ENCODE measurements at regions of chr18 and their contacts with region 1.

Region 1: DNA sequence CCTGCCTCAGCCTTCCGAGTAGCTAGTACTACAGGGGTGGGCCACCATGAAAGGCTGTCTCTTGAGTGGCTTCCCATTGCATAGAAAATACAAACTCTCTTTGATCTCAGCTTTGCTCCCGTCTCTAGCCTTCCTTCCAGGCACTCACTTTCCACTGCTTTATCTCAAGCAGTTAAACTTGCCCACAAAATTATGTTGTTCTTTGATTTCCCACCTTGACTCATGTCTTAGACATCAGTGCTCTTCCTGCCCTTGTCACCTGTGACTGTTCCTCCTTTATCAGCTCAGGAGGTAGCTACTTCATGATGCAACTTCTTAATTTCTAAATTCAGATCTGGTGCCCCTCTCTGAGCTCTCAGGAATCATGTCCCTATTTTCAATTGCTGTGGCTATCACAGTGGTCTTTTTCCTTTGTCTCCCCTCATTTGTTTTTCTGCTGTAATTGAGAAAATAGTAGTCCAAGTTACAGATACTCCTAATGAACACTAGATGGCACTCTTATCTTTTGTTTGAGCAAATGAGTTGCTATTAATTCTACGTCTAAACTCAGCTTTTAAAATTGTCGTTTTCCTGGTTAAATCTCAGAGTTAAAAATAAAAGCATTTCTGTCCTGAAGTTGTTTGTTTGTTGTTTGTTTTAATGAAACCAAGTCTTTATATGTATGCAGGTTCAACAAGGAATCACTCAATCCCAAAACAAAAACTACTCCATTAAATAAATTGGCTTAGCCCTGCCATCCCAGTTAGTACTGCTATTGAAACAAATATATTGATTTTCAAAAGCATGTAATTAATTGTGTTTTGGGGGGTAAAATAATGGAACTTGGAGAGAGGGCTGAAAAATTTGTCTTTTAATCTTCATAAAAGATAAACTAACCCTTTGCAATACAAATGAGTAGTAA is 46.9 kb upstream of the GREB1L start:
- DNase-seq: no peak
- H3K4me3 Mint-ChIP-seq: no peak overlapping the region
- H3K27ac Mint-ChIP-seq: no peak overlapping the region
- H3K4me1 Mint-ChIP-seq: no peaks in the 10 kb centered on the region
- H3K27me3 Mint-ChIP-seq: peaks cover 9% of the 10 kb centered on the region

Region 2: GRCh38 chr18:21242141-21242779 is 47.1 kb after region 1 on chr18 and contains the start of gene GREB1L:
- intact Hi-C with region 1: no loop called
- DNase-seq: no peak
- H3K4me3 Mint-ChIP-seq: no peak within 1 kb of the TSS
- H3K27ac Mint-ChIP-seq: no peak within 1 kb of the TSS
- H3K4me1 Mint-ChIP-seq: no peaks in the 10 kb centered on the region
- H3K27me3 Mint-ChIP-seq: peaks cover 59% of the 10 kb centered on the region
- total RNA-seq, gene GREB1L: not detected in 2 replicates

Region 3: GRCh38 chr18:21257386-21257785 is 62.3 kb after region 1 on chr18:
- intact Hi-C with region 1: no loop called
- DNase-seq: no peak
- H3K4me3 Mint-ChIP-seq: no peak overlapping the region
- H3K27ac Mint-ChIP-seq: no peak overlapping the region
- H3K4me1 Mint-ChIP-seq: no peaks in the 10 kb centered on the region
- H3K27me3 Mint-ChIP-seq: peaks cover 7% of the 10 kb centered on the region

Region 4: GRCh38 chr18:21444465-21445023 is 249.4 kb after region 1 on chr18:
- intact Hi-C with region 1: loop called (anchors 1 kb)
- DNase-seq: no peak
- H3K4me3 Mint-ChIP-seq: no peak overlapping the region
- H3K27ac Mint-ChIP-seq: no peak overlapping the region
- H3K4me1 Mint-ChIP-seq: no peaks in the 10 kb centered on the region
- H3K27me3 Mint-ChIP-seq: peaks cover 8% of the 10 kb centered on the region